Gastrocnemius medialis (tissue), 4 donors: ENCODE measurements at regions of chr14 and their contacts with region 1.

Region 1: DNA sequence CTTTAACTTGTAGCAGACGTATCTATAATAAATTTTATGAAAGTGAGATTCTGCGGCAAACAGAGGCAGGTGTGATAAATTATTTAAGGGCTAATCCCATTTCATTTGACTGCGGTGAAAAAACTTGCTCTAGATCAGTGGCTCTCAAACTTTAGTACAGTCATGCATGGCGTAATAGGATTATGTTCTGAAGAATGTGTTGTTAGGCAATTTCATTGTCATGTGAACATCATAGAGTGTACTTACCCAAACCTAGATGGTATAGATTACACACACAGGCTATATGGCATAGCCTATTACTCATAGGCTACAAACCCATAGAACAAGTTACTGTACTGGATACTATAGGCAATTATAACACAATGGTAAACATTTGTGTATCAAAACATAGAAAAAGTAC is 83.7 kb downstream of the HEATR5A start:
- DNase-seq: no peak
- ATAC-seq: peak; percentile 87 to 91
- H3K4me3 ChIP-seq: no peak overlapping the region
- H3K27ac ChIP-seq: peak overlapping the region; percentile 78 to 91 (median 87)
- H3K4me1 ChIP-seq: peaks cover 18 to 23% of the 10 kb centered on the region in 2 donors
- H3K27me3 ChIP-seq: no peaks in the 10 kb centered on the region
- CTCF ChIP-seq: peak in 1 of 5 experiments; percentile 17
- POLR2A ChIP-seq: no peak

Region 2: DNA sequence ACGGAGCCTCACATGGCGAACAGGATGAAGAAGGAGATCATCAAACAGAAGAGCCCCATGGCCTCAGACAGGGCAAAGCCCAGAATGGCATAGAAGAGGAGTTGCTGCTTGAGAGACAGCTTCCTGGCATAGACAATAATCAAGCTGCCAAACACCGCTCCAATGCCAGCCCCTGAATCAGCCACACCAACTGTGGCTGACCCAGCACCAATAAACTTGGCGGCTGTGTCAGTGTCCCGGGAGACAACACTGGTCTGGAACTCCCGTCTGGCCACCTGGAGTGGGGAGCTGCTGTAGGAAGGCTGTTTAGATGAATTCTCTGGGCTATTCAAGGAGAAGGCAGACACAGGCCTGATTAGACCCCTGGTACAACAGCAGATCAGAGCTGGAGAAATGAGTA is 16.4 kb before region 1 on chr14:
- in situ Hi-C with region 1: no loop called
- intact Hi-C with region 1: loop called (anchors 2 kb)
- DNase-seq: peak; percentile 76 to 88
- ATAC-seq: peak; percentile 94 to 99
- H3K4me3 ChIP-seq: no peak overlapping the region
- H3K27ac ChIP-seq: peak overlapping the region; percentile 60 to 81 (median 76)
- H3K4me1 ChIP-seq: peaks cover 16% of the 10 kb centered on the region in 2 donors
- H3K27me3 ChIP-seq: no peaks in the 10 kb centered on the region
- CTCF ChIP-seq: no peak
- POLR2A ChIP-seq: no peak